ENCODE measurements at regions of chrX and their contacts with region 1.

Region 1: GRCh38 chrX:124098089-124098488 is 136.6 kb downstream of the STAG2 start:
- DNase-seq: no peak
- H3K4me3 Mint-ChIP-seq: no peak overlapping the region
- H3K27ac Mint-ChIP-seq: no peak overlapping the region
- H3K4me1 Mint-ChIP-seq: no peaks in the 10 kb centered on the region
- H3K27me3 Mint-ChIP-seq: no peaks in the 10 kb centered on the region

Region 2: GRCh38 chrX:124085063-124085462 is 13.0 kb before region 1 on chrX:
- intact Hi-C with region 1: no loop called
- DNase-seq: no peak
- H3K4me3 Mint-ChIP-seq: no peak overlapping the region
- H3K27ac Mint-ChIP-seq: no peak overlapping the region
- H3K4me1 Mint-ChIP-seq: peaks cover 21% of the 10 kb centered on the region
- H3K27me3 Mint-ChIP-seq: no peaks in the 10 kb centered on the region

Region 3: GRCh38 chrX:124113799-124114600 is 15.9 kb after region 1 on chrX:
- intact Hi-C with region 1: no loop called
- DNase-seq: no peak
- H3K4me3 Mint-ChIP-seq: no peak overlapping the region
- H3K27ac Mint-ChIP-seq: no peak overlapping the region
- H3K4me1 Mint-ChIP-seq: no peaks in the 10 kb centered on the region
- H3K27me3 Mint-ChIP-seq: no peaks in the 10 kb centered on the region

Region 4: GRCh38 chrX:124358800-124359383 is 260.8 kb after region 1 on chrX:
- intact Hi-C with region 1: loop called (anchors 10 kb)
- DNase-seq: no peak
- H3K4me3 Mint-ChIP-seq: peak overlapping the region; percentile 61
- H3K27ac Mint-ChIP-seq: peak overlapping the region; percentile 84
- H3K4me1 Mint-ChIP-seq: peaks cover 51% of the 10 kb centered on the region
- H3K27me3 Mint-ChIP-seq: no peaks in the 10 kb centered on the region

Region 5: GRCh38 chrX:124388562-124388961 is 290.5 kb after region 1 on chrX:
- intact Hi-C with region 1: loop called (anchors 10 kb)
- DNase-seq: peak; percentile 13
- H3K4me3 Mint-ChIP-seq: no peak overlapping the region
- H3K27ac Mint-ChIP-seq: no peak overlapping the region
- H3K4me1 Mint-ChIP-seq: peaks cover 38% of the 10 kb centered on the region
- H3K27me3 Mint-ChIP-seq: no peaks in the 10 kb centered on the region

Measured in activated T-helper 2 cell treated with anti-CD3 and anti-CD28 coated beads, Interferon-gamma antibody, Interleukin-2, Interleukin-4, amounts not matched to agents 10 μg/mL and 5 μg/mL and 100 μg/mL, durations not matched to agents 14 hours and 24 hours and 36 hours (primary cell).